Activated T-helper 1 cell treated with anti-CD3 and anti-CD28 coated beads, Interleukin-12 subunit alpha, Interleukin-12 subunit beta, Interleukin-2, Interleukin-4 antibody, amounts not matched to agents 30 ng/mL and 10 ng/mL and 1 ng/mL, durations not matched to agents 14 hours and 24 hours and 36 hours (primary cell): ENCODE measurements at regions of chr1 and their contacts with region 1.

Region 1: GRCh38 chr1:24415334-24415909 is at the start of gene NIPAL3:
- DNase-seq: peak; percentile 97
- H3K4me3 Mint-ChIP-seq: peak within 1 kb of the TSS; percentile 97
- H3K27ac Mint-ChIP-seq: peak within 1 kb of the TSS; percentile 78
- H3K4me1 Mint-ChIP-seq: peaks cover 51% of the 10 kb centered on the region
- H3K27me3 Mint-ChIP-seq: no peaks in the 10 kb centered on the region
- total RNA-seq, gene NIPAL3: 22.7 and 23.5 TPM in 2 replicates

Region 2: GRCh38 chr1:23979878-23980724 is 435.3 kb before region 1 on chr1 and contains the start of gene SRSF10:
- intact Hi-C with region 1: loop called (anchors 10 kb)
- DNase-seq: peak; percentile 98
- H3K4me3 Mint-ChIP-seq: peak within 1 kb of the TSS; percentile 97
- H3K27ac Mint-ChIP-seq: peak within 1 kb of the TSS; percentile 97
- H3K4me1 Mint-ChIP-seq: peaks cover 47% of the 10 kb centered on the region
- H3K27me3 Mint-ChIP-seq: no peaks in the 10 kb centered on the region
- total RNA-seq, gene SRSF10: 238 and 243 TPM in 2 replicates

Region 3: GRCh38 chr1:24374891-24375786 is 40.3 kb before region 1 on chr1:
- intact Hi-C with region 1: no loop called
- DNase-seq: no peak
- H3K4me3 Mint-ChIP-seq: no peak overlapping the region
- H3K27ac Mint-ChIP-seq: no peak overlapping the region
- H3K4me1 Mint-ChIP-seq: peaks cover 5% of the 10 kb centered on the region
- H3K27me3 Mint-ChIP-seq: no peaks in the 10 kb centered on the region

Region 4: GRCh38 chr1:24481101-24481500 is 65.7 kb after region 1 on chr1:
- intact Hi-C with region 1: loop called (anchors 1 kb)
- DNase-seq: peak; percentile 44
- H3K4me3 Mint-ChIP-seq: peak overlapping the region; percentile 60
- H3K27ac Mint-ChIP-seq: peak overlapping the region; percentile 96
- H3K4me1 Mint-ChIP-seq: peaks cover 45% of the 10 kb centered on the region
- H3K27me3 Mint-ChIP-seq: no peaks in the 10 kb centered on the region

Region 5: DNA sequence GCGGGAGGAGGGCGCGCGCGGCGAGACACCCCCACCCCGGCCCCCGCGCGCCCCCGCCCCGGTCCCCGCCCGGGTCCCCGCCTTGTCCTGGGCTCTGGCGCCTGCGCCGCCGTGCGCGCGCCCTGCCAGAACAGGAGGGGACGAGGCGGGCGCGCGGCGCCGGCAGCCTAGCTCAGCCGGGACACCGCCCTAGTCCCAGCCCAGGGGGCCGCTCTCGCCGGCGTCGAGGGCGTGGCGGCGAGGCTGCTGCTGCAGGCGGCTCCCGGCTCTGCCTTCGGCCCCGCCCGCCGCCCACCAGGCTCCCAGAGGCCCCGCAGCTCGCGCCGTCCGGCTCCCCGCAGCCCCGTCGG is 87.3 kb after region 1 on chr1 and contains the start of gene RCAN3:
- intact Hi-C with region 1: loop called (anchors 1 kb)
- DNase-seq: peak; percentile 91
- H3K4me3 Mint-ChIP-seq: peak within 1 kb of the TSS; percentile 97
- H3K27ac Mint-ChIP-seq: peak within 1 kb of the TSS; percentile 94
- H3K4me1 Mint-ChIP-seq: peaks cover 64% of the 10 kb centered on the region
- H3K27me3 Mint-ChIP-seq: no peaks in the 10 kb centered on the region
- total RNA-seq, gene RCAN3: 26.5 and 26.8 TPM in 2 replicates

Region 6: DNA sequence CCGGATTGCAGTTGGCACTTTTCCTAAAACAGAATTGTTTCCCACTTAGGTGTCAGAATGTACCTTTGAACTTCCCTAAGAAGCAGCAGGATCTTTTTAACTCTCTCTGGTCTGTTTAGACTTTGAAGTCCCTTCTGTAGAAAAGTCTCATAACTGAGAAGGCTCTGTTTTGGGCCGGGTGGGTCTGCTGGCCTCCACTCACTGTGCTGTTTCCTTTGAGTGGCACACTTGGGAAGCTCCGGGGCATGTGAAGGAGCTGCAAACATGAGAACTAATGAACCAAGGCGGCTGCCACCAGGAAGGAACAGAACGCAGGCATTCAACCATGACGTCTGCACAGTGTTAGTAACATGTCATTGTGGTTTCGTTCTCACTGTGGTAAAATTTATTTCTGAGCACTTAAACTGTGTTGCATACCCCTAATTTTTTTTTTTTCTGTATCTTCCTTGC is 121.0 kb after region 1 on chr1:
- intact Hi-C with region 1: loop called (anchors 1 kb)
- DNase-seq: peak; percentile 38
- H3K4me3 Mint-ChIP-seq: peak overlapping the region; percentile 75
- H3K27ac Mint-ChIP-seq: peak overlapping the region; percentile 95
- H3K4me1 Mint-ChIP-seq: peaks cover 67% of the 10 kb centered on the region
- H3K27me3 Mint-ChIP-seq: no peaks in the 10 kb centered on the region

Region 7: DNA sequence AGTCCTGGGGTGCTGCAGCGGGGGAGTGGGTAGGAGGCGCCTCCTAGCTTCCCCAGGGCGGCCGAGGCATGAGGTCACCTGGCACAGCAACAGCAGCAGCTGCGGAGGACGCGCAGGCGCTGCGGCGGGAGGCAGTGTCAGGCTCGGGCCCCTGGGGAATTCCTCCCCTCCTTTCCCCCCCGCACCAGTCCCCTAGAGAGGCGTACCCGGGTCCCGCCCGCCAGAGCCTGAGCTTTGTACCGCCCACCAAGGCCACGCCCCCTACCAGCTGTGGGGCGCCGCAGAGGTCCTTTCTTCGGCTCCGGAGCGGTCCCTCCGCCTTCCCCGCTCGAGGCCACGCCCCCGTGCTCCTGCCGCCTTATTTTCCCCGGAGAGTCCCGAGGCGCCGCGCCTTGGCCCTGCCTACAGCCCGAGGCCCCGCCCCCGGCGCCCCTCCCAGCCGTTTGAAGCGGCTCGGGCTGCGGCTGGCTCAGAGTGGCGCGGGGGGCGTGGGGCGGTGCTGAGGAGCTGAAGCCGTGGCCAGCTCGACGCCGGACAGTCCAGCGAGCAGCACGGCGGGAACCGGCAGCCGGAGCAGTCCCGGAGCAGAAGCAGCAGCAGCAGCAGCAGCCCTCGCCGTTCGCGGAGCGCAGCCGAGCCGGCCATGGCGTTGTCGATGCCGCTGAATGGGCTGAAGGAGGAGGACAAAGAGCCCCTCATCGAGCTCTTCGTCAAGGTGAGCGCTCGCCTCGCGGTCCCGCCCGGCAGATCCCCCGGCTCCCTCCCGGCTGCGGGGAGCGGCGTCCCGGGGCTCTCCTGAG is 329.7 kb after region 1 on chr1 and contains the start of gene CLIC4:
- intact Hi-C with region 1: loop called (anchors 10 kb)
- DNase-seq: peak; percentile 100
- H3K4me3 Mint-ChIP-seq: peak within 1 kb of the TSS; percentile 93
- H3K27ac Mint-ChIP-seq: peak within 1 kb of the TSS; percentile 91
- H3K4me1 Mint-ChIP-seq: peaks cover 56% of the 10 kb centered on the region
- H3K27me3 Mint-ChIP-seq: peaks cover 2% of the 10 kb centered on the region
- total RNA-seq, gene CLIC4: 16.8 and 20.6 TPM in 2 replicates